H1 (cell line): ENCODE measurements at regions of chr22 and their contacts with region 1.

Region 1: DNA sequence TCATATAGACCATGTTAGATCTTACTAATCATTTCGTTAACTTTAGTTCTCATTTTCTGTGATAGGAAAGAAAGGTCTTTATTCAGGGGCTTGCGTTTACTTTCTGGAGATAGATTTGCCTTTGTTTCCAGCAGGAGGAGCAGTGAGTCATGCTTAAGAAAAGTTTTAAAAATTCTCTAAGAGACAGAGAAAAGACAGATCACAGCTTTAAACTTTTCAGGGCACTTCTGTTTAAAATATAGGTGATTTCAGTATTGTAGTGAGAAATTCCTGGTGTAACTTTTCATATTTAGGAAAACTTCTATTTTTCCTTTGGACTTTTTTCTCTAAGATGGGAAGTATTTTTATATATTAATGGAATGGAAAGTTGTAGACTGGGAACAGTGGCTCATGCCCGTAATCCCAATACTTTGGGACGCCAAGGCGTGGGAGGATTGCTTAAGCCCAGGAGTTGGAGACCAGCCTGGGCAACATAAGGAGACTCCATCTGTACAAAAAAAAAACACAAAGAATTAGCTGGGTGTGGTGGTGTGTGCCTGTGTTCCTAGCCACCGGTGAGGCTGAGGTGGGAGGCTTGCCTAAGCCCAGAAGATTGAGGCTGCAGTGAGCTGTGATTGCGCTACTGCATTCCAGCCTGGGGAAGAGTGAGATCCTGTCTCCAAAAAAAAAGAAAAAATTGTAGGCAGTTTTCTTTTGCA is 60.3 kb downstream of the ATXN10 start:
- DNase-seq: no peak
- H3K4me3 ChIP-seq: no peak overlapping the region
- H3K27ac ChIP-seq: no peak overlapping the region
- H3K4me1 ChIP-seq: no peaks in the 10 kb centered on the region
- H3K27me3 ChIP-seq: no peaks in the 10 kb centered on the region
- CTCF ChIP-seq: peak in 2 of 3 experiments; percentile 40; a peak in 2 of 4 replicates
- EP300 ChIP-seq: no peak
- POLR2A ChIP-seq: no peak
- RAD21 ChIP-seq: peak; percentile 40 to 50

Region 2: GRCh38 chr22:45511847-45512281 is 220.1 kb before region 1 on chr22:
- CTCF ChIA-PET with region 1: no interaction called
- POLR2A ChIA-PET with region 1: no interaction called
- DNase-seq: no peak
- H3K4me3 ChIP-seq: no peak overlapping the region
- H3K27ac ChIP-seq: no peak overlapping the region
- H3K4me1 ChIP-seq: peaks cover 3 to 34% (median 11%) of the 10 kb centered on the region in 4 experiments
- H3K27me3 ChIP-seq: no peaks in the 10 kb centered on the region
- CTCF ChIP-seq: no peak
- EP300 ChIP-seq: no peak
- POLR2A ChIP-seq: no peak
- RAD21 ChIP-seq: no peak

Region 3: DNA sequence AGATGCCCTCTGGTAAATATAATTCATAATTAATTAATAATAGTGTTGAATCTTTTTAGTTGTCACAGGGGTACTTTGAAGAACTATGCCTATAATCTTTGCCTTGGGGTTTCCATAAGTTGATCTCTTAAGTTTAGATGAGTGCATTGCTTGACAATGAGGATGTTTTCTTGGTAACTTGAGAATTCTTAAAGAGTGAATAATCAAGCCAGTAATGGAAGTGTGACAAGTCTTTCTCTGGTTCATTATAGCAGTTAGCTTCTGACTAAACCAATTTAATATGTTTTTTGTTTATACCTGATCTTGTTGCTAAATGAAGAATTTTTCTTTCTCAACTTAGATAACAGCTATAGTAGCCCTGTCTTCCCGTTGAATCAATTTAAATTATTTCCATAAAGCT is 14.2 kb before region 1 on chr22:
- CTCF ChIA-PET with region 1: interaction called, 31 read pairs
- POLR2A ChIA-PET with region 1: interaction called, 3 read pairs
- DNase-seq: no peak
- H3K4me3 ChIP-seq: no peak overlapping the region
- H3K27ac ChIP-seq: no peak overlapping the region
- H3K4me1 ChIP-seq: no peaks in the 10 kb centered on the region
- H3K27me3 ChIP-seq: no peaks in the 10 kb centered on the region
- CTCF ChIP-seq: no peak
- EP300 ChIP-seq: no peak
- POLR2A ChIP-seq: no peak
- RAD21 ChIP-seq: no peak